Prostate gland (tissue), 2 donors: ENCODE measurements at regions of chr15 and their contacts with region 1.

Region 1: GRCh38 chr15:96737408-96737807 is 406.9 kb downstream of the NR2F2 start:
- DNase-seq: no peak
- H3K4me3 ChIP-seq: no peak overlapping the region
- H3K27ac ChIP-seq: no peak overlapping the region
- H3K4me1 ChIP-seq: no peaks in the 10 kb centered on the region
- H3K27me3 ChIP-seq: no peaks in the 10 kb centered on the region
- CTCF ChIP-seq: no peak
- POLR2A ChIP-seq: no peak

Region 2: DNA sequence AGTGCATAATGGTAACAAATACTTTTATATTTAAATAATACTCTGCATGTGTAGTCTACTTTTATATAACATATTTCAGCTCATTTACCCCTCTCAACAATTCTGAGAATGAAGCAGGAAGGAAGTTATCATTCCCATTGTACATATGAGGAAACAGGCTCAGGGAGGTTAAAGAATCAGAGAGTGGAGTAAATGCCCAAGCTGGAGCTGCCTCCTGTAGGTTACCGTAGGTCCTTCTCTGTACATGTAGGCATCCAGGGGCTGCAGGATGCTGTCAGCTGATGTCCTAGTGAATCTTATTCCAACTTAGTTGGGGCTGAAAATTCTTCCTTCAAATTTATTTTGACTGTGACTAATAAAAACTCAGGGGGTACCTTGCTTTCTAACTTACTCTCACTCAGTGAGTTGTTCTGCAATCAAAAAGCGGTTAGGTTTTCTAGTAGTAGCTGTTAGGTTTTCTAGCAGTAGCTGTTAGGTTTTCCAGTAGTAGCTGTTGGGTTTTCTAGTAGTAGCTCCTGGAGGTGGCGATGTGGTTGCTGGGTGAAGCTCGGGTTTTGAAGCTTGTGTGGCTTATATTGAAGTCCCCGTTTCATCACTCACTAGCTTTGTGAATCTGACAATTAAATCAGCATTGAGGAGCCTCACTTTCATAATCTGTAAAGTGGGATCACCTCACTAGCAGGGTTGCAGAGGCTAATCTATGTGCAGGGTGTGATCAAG is 49.9 kb before region 1 on chr15:
- intact Hi-C with region 1: loop called (anchors 10 kb)
- DNase-seq: no peak
- H3K4me3 ChIP-seq: no peak overlapping the region
- H3K27ac ChIP-seq: no peak overlapping the region
- H3K4me1 ChIP-seq: no peaks in the 10 kb centered on the region
- H3K27me3 ChIP-seq: no peaks in the 10 kb centered on the region
- CTCF ChIP-seq: no peak
- POLR2A ChIP-seq: no peak

Region 3: DNA sequence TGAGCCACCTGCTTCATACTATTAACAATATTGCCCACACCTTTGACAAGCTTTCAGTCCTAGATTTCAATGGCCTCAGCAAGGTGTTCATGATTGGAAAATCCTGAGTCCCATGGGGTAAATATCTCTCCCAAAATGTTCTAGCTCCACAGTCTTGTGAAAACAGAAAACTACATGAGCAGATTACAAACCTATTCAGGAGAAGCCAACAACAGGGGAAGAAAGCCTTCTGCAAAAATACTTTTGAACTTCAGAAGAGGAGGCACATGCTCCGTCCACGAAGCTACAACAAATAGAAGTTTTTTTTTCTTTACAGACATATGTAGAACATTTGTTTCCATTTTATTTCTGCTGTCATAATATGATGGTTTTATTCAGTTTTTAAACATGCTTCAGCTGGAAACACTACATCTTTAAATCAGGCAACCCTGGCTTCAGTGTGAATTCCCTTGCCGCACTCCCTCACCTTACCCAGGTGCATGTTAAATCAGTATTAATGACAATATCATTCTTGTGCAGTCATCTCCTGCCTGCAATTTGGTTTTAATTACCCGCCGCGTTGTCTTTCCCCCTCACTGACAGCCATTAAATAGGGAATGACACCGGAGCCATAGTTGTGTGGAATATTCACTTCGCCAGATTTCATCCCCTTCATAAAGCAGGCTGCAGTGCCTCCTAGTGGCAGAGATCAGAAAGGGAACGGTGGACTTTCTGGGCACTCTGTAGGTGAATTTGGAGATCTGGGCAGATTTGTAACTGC is 497.6 kb after region 1 on chr15:
- intact Hi-C with region 1: no loop called
- DNase-seq: no peak
- H3K4me3 ChIP-seq: no peak overlapping the region
- H3K27ac ChIP-seq: no peak overlapping the region
- H3K4me1 ChIP-seq: no peaks in the 10 kb centered on the region
- H3K27me3 ChIP-seq: no peaks in the 10 kb centered on the region
- CTCF ChIP-seq: peak; percentile 35 to 74 (median 66)
- POLR2A ChIP-seq: no peak